ENCODE measurements at regions of chr6 and their contacts with region 1.

Region 1: DNA sequence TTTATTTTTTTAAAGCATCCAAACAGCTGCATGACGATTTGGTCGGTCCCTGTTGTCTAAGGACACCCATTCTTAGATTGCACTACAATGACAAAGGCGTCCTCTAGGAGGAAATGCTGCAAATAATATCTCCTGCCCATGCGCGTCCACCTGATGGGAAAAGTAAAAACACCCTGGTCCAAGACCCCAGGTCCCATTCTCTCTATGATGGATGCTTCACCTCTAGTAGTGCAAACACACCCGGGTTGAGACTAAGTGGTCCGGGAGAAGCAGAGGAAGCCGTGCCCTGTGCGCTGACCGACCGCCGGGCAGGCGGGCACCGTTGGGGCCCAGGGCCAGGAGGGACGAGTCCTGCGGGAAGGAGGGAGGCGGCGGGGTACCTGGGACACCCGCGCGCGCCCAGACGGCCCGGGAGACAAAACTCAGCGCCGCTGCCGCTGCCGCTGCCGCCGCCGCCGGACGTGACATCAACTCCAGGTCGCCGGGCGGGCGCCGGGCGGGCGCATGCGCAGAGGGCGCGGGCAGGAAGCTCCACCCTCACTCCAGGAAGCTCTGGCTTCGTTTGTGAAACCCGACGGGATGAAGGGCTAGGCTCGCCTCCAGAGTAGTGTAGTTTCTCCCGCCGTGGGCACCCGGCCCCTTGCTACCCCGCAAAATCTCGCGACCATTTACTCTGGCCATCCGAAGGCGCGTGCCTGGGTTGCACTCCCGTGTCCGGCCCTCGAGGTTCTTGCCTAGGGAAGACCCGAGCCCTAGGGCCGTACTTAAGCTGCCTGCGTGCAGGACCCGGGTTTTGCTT is at the start of gene TBC1D7:
- DNase-seq: peak; percentile 19
- H3K4me3 ChIP-seq: peak within 1 kb of the TSS; percentile 88
- CTCF ChIP-seq: no peak

Region 2: GRCh38 chr6:12911387-12911960 is 416.8 kb before region 1 on chr6:
- CTCF ChIA-PET with region 1: interaction called, 84 read pairs
- POLR2A ChIA-PET with region 1: no interaction called
- DNase-seq: no peak
- H3K4me3 ChIP-seq: no peak overlapping the region
- CTCF ChIP-seq: peak; percentile 15

Region 3: GRCh38 chr6:13342414-13343019 is 14.2 kb after region 1 on chr6:
- CTCF ChIA-PET with region 1: interaction called, 20 read pairs
- POLR2A ChIA-PET with region 1: no interaction called
- DNase-seq: no peak
- H3K4me3 ChIP-seq: no peak overlapping the region
- CTCF ChIP-seq: no peak

Region 4: GRCh38 chr6:13355043-13355951 is 27.0 kb after region 1 on chr6:
- CTCF ChIA-PET with region 1: interaction called, 14 read pairs
- POLR2A ChIA-PET with region 1: interaction called, 4 read pairs
- DNase-seq: peak; percentile 92
- H3K4me3 ChIP-seq: no peak overlapping the region
- CTCF ChIP-seq: no peak

Region 5: GRCh38 chr6:13574149-13574570 is 245.9 kb after region 1 on chr6:
- CTCF ChIA-PET with region 1: interaction called, 24 read pairs
- POLR2A ChIA-PET with region 1: interaction called, 5 read pairs
- DNase-seq: no peak
- H3K4me3 ChIP-seq: peak overlapping the region; percentile 80
- CTCF ChIP-seq: peak; percentile 43

Measured in AG04449 (cell line).